Psoas muscle (tissue), 8 donors: ENCODE measurements at regions of chr5 and their contacts with region 1.

Region 1: DNA sequence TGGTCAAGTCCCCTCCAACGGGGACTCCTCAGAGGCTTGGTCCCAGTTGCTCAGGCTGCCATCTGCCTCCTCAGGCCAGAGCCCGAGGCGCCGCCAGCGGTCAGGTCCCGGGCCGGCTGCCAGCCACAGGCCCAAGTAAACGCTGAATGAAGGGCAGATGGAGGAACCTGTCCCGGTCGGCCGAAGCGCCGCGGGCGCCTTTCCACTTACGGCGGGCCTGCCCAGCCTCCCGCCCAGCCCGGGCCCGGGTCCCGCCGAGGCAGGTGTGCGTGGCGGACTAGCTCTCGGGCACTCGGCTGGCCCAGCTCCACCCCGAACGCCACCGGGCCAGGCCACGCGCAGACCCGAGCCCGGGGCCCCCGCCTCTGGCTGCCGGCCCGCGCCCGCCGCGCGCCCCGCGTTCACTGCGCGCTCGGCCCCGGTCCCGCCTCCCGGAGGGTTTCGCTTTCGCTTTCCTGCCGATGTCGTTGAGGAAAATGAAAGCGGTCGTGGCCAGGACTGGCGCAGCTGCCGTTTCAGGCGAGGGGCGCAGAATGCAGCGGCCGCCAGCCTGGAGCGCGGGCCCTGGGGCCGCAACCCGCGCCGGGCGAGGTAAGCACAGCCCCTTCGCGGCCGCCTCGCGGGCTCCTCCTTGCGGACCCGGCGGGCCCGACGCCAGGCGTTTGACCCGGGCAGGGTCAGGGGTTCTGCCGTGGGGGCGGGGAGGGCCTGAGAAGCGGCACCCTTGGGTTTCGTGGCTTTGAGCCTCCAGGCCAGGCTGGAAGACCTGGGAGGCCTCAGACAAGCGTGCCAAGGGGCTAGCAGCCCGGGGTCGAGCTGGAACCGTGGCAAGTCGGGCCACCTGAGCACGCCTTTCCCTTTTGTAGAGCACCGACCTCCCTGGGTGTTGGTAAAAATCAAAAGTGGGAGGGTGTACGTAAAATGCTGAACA is 41.2 kb downstream of the SLC22A5 start:
- DNase-seq: peak; percentile 87 to 93
- ATAC-seq: peak; percentile 79 to 86 (median 82)
- H3K4me3 ChIP-seq: peak overlapping the region; percentile 92
- H3K27ac ChIP-seq: peak overlapping the region; percentile 96
- H3K4me1 ChIP-seq: peaks cover 54% of the 10 kb centered on the region
- H3K27me3 ChIP-seq: no peaks in the 10 kb centered on the region
- CTCF ChIP-seq: peak; percentile 59

Region 2: DNA sequence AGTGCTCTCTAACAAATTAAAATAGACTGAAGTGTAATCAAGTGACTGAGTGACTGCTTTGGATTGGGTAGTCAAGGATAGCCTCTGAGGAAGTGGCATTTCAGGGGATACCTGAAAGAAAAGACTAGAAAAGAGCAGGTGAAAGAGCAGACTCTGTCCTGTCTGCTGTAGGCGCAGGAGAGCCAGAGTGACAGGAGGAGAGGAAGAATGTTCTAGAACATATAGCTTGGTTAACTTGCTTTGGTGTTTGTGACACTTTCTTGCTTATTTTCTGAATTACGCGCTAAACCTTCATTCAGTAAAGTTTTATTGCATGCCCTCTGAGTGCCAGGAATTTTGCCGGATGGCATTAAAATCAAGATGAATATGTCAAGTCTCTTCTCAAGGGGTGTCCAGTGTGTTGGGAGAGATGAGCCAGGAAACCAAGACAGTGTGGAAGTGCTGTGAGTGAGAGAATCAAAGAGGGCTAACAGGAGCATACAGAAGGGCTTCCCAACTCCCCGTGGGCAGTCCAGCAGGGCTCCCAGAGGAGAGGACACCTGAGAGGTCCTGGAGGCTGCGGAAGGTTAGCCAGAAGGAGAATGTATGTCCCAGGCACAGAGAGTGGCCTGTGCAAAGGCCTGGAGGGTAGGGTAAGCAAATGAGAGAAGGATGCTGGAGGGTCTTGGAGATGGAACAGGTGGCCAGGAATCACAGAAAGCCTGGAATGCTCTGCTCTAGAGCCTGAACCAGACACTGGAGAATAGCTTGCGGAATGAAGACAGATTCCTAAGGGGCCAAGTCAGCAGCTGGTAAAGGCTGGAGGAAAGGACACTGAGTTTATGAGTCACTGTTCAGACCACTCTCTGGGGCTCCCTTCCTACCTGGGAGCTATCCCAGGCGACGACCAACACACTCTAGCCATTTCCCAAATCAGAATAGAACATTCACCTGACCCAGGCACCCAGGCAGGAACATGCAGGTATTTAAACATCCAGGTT is 18.1 kb after region 1 on chr5:
- intact Hi-C with region 1: loop called in 1 of 2 experiments (anchors 1 kb)
- DNase-seq: no peak
- ATAC-seq: peak in 1 of 4 donors; percentile 12
- H3K4me3 ChIP-seq: peak overlapping the region; percentile 0
- H3K27ac ChIP-seq: peak overlapping the region; percentile 82
- H3K4me1 ChIP-seq: peaks cover 77% of the 10 kb centered on the region
- H3K27me3 ChIP-seq: no peaks in the 10 kb centered on the region
- CTCF ChIP-seq: no peak